WTC11 (cell line): ENCODE measurements at regions of chr6 and their contacts with region 1.

Region 1: DNA sequence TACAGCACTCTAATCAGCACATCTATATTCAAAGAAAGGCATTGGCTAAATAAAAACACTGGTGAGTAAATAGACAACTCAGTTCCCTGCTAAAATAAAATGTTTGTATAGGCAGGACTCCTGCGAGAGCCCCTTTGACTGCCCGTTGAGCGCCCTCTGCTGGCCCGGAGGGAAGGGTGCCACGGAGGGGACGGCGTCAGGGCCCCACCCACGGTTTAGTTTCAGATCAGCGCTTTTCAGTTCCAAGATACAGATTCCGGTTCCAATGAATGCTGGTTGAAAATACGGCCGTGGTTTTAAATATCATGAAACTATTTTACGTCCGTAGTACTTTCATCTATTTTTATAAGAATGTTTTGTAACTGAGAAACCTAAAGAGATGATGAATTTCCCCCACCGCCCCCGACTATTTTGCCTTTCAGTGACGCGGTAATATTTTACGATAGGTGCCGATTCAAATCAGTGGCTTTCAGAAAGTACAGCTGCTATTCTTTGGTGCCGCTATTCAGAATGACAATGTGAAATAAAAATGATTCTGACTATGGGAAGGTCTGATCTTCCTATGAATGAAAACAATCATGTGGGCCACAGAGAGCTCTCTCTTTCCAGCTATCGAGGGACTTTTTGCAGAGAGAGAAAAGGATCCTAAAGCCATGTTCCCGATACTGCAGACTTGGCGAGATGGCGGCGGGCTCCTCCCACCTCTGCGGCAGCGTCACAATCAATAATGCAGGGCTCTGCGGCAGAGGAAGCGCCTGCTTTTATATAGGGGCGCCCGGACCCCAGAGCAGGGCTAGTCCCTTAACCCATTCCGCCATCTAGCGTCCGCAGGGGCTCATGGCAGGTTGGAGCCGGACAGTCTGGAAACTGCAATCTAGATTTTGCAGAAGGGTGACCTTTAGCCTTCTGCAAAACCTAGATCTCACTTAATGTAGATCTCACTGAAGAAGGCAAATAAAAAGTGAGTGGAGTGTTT is 10.6 kb upstream of the CCN6 start:
- DNase-seq: peak; percentile 97
- ATAC-seq: peak; percentile 99
- H3K4me3 Mint-ChIP-seq: peak overlapping the region; percentile 93
- H3K27ac Mint-ChIP-seq: peak overlapping the region; percentile 99
- H3K4me1 Mint-ChIP-seq: peaks cover 8% of the 10 kb centered on the region
- H3K27me3 Mint-ChIP-seq: no peaks in the 10 kb centered on the region
- CTCF ChIP-seq: peak; percentile 92

Region 2: GRCh38 chr6:111663692-111664564 is 379.4 kb before region 1 on chr6:
- CTCF ChIA-PET with region 1: interaction called, 15 read pairs
- POLR2A ChIA-PET with region 1: no interaction called
- DNase-seq: peak; percentile 84
- ATAC-seq: peak; percentile 90
- H3K4me3 Mint-ChIP-seq: peak overlapping the region; percentile 50
- H3K27ac Mint-ChIP-seq: peak overlapping the region; percentile 94
- H3K4me1 Mint-ChIP-seq: peaks cover 65% of the 10 kb centered on the region
- H3K27me3 Mint-ChIP-seq: no peaks in the 10 kb centered on the region
- CTCF ChIP-seq: no peak

Region 3: DNA sequence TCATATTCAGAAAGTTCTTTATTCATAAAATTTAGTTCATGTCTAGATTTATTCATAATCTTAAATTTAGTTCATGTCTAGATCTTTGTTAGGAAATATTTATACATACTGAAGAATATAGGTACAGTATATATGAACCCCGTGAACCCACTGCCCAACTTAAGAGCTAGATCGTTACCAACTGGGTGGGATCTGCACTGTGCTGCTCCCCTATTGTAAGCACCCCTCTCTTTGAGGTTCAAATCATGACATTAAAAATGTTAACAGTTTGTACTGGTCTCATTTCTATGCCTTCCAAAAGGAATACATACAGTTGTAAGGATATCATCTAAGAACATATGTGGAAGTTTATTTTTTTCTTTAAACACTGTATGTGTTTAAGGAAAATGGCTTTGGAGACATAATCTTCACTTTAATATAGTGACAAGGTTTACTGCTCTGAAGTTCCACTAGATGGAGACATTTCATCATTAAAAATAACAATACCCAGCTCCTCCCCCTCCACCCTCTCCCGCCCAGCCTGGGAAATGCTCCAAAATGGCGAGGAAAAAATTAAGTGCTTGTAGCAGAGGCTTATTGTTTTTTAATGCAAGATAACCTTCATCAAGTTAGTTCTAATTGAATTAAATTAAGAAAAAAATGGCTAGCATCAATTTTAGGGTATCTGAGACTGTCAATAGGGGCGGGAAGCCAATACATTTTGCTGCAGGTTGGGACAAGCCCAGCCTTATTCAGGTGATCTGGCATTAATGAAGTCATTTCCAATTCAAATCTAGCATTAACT is 333.5 kb before region 1 on chr6:
- CTCF ChIA-PET with region 1: interaction called, 19 read pairs
- POLR2A ChIA-PET with region 1: interaction called, 5 read pairs
- DNase-seq: no peak
- ATAC-seq: peak; percentile 82
- H3K4me3 Mint-ChIP-seq: no peak overlapping the region
- H3K27ac Mint-ChIP-seq: no peak overlapping the region
- H3K4me1 Mint-ChIP-seq: peaks cover 29% of the 10 kb centered on the region
- H3K27me3 Mint-ChIP-seq: no peaks in the 10 kb centered on the region
- CTCF ChIP-seq: peak; percentile 46

Region 4: GRCh38 chr6:111973118-111973761 is 70.1 kb before region 1 on chr6:
- CTCF ChIA-PET with region 1: no interaction called
- POLR2A ChIA-PET with region 1: no interaction called
- DNase-seq: no peak
- ATAC-seq: peak; percentile 50; the same call in 1 of the 2 replicates
- H3K4me3 Mint-ChIP-seq: no peak overlapping the region
- H3K27ac Mint-ChIP-seq: no peak overlapping the region
- H3K4me1 Mint-ChIP-seq: peaks cover 18% of the 10 kb centered on the region
- H3K27me3 Mint-ChIP-seq: peaks cover 14% of the 10 kb centered on the region
- CTCF ChIP-seq: no peak

Region 5: DNA sequence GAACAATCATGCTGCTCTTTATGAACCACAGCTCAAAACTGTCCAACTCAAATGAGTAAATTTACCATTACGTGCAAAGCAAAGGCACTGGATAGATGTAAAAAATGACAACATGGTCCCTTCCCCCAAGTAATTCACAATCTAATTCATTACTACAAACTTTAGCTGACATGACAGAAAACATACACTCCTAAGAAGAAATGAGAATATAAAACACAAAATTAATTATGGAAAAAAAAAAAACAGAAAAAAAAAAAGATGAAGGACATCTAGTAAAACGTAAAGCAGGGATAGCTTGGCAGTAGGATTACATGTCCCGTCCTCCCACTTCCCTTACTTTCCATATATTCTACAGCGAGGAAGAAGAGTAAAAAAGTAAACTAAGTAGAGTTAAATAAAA is 38.2 kb after region 1 on chr6:
- CTCF ChIA-PET with region 1: no interaction called
- POLR2A ChIA-PET with region 1: no interaction called
- DNase-seq: no peak
- ATAC-seq: no peak
- H3K4me3 Mint-ChIP-seq: no peak overlapping the region
- H3K27ac Mint-ChIP-seq: no peak overlapping the region
- H3K4me1 Mint-ChIP-seq: peaks cover 2% of the 10 kb centered on the region; the same call in 1 of the 2 replicates
- H3K27me3 Mint-ChIP-seq: no peaks in the 10 kb centered on the region
- CTCF ChIP-seq: no peak